Testis (tissue), 5 donors: ENCODE measurements at regions of chr20 and their contacts with region 1.

Region 1: GRCh38 chr20:31859998-31860709 is 10.2 kb downstream of the DUSP15 start:
- DNase-seq: no peak
- H3K4me3 ChIP-seq: peak overlapping the region in 1 of 2 donors; percentile 64
- H3K27ac ChIP-seq: no peak overlapping the region
- H3K4me1 ChIP-seq: peaks cover 16% of the 10 kb centered on the region
- H3K27me3 ChIP-seq: no peaks in the 10 kb centered on the region
- CTCF ChIP-seq: no peak
- POLR2A ChIP-seq: no peak

Region 2: GRCh38 chr20:32031007-32031958 is 171.1 kb after region 1 on chr20:
- intact Hi-C with region 1: loop called (anchors 10 kb)
- DNase-seq: peak; percentile 86
- H3K4me3 ChIP-seq: peak overlapping the region; percentile 39 to 46
- H3K27ac ChIP-seq: no peak overlapping the region
- H3K4me1 ChIP-seq: peaks cover 5% of the 10 kb centered on the region
- H3K27me3 ChIP-seq: no peaks in the 10 kb centered on the region
- CTCF ChIP-seq: peak; percentile 79 to 94 (median 80)
- POLR2A ChIP-seq: no peak

Region 3: GRCh38 chr20:33097001-33097400 is 1236.8 kb after region 1 on chr20:
- intact Hi-C with region 1: no loop called
- DNase-seq: peak; percentile 74
- H3K4me3 ChIP-seq: no peak overlapping the region
- H3K27ac ChIP-seq: no peak overlapping the region
- H3K4me1 ChIP-seq: no peaks in the 10 kb centered on the region
- H3K27me3 ChIP-seq: no peaks in the 10 kb centered on the region
- CTCF ChIP-seq: no peak
- POLR2A ChIP-seq: no peak